HEK293T (cell line): ENCODE measurements at regions of chr12 and their contacts with region 1.

Region 1: DNA sequence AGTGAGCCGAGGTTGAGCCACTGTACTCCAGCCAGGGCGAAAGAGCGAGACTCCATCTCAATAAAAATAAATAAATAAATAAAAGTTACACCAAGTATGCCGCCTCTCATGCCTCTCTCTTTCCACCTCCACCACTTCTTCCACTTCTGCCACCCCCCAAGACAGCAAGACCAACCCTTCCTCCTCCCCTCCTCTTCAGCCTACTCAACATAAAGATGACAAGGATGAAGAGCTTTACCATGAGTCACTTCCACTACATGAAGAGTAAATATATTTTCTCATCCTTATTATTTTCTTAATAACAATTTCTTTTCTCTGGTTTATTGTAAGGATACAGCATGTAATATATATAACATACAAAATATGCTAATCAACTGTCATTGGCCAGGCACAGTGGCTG is 3.6 kb upstream of the TMED2 start:
- DNase-seq: no peak

Region 2: GRCh38 chr12:123591702-123592481 is 11.1 kb after region 1 on chr12:
- CTCF ChIA-PET with region 1: interaction called, 12 read pairs
- POLR2A ChIA-PET with region 1: interaction called, 3 read pairs
- DNase-seq: no peak

Region 3: GRCh38 chr12:123723765-123724164 is 143.0 kb after region 1 on chr12:
- CTCF ChIA-PET with region 1: no interaction called
- POLR2A ChIA-PET with region 1: no interaction called
- DNase-seq: no peak